Activated CD4-positive, alpha-beta memory T cell treated with anti-CD3 and anti-CD28 coated beads for 36 hours (primary cell): ENCODE measurements at regions of chr10 and their contacts with region 1.

Region 1: DNA sequence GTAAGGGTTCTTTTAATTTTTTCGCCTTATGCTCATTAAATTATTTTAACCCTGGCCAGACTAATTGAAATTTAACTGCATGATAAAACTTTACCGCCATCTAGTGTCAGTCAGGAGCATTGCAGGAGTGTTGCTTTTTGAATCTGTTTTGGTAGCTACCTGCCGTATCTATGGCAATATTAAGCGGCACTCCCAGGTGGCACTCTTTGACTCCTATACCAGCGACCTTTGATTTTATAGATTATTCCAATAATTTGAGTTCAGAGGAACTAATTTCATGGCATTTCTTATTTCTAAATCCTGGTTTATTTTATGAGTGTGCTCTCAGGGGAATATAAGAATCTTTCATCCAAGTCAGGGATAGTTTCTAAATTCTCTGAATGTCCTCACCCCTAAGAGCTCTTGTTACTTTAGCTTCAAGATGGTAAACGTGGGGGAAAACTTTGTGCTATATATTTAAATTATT is 198.9 kb downstream of the REEP3 start:
- DNase-seq: peak; percentile 47
- H3K4me3 Mint-ChIP-seq: no peak overlapping the region
- H3K27ac Mint-ChIP-seq: no peak overlapping the region
- H3K4me1 Mint-ChIP-seq: peaks cover 7% of the 10 kb centered on the region
- H3K27me3 Mint-ChIP-seq: peaks cover 5% of the 10 kb centered on the region

Region 2: DNA sequence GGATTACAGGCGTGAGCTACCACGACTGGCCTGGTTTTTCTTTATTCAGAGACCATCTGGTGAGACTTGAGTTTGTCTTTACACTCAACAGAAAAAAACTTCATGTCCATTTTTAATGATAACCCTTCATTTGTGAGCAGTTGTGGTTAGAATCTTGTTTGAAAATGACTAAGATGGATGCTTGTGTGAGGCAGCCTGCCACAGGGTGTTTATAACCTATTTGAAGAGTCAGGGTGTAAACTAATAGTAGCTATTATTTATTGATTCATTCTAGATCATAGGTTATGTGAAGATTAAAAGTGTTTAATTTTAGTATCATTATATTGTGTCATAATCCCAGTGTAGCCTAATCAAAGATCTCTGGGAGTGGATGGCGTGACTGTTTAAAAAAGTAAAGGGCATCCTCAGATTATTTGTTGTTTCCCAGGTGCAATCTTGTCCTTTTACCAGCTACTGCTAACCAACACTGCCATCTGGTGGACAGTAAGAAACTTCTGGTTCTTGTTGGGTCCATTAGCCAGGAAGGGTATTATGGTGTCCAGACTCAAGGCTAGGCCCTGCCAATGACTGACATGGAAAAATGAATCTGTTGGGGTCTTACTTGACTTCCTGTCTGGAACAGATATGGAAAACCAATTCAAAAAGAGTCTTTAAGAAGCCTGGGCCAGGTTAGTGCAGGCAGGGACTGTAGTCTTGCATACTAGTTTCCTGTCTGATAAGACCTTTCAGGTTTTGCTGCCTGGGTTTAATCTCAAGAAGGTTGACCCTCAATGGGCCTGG is 562.1 kb before region 1 on chr10:
- CTCF ChIA-PET with region 1: interaction called, 319 read pairs
- POLR2A ChIA-PET with region 1: no interaction called
- intact Hi-C with region 1: no loop called
- DNase-seq: peak; percentile 41
- H3K4me3 Mint-ChIP-seq: no peak overlapping the region
- H3K27ac Mint-ChIP-seq: no peak overlapping the region
- H3K4me1 Mint-ChIP-seq: peaks cover 7% of the 10 kb centered on the region
- H3K27me3 Mint-ChIP-seq: no peaks in the 10 kb centered on the region

Region 3: DNA sequence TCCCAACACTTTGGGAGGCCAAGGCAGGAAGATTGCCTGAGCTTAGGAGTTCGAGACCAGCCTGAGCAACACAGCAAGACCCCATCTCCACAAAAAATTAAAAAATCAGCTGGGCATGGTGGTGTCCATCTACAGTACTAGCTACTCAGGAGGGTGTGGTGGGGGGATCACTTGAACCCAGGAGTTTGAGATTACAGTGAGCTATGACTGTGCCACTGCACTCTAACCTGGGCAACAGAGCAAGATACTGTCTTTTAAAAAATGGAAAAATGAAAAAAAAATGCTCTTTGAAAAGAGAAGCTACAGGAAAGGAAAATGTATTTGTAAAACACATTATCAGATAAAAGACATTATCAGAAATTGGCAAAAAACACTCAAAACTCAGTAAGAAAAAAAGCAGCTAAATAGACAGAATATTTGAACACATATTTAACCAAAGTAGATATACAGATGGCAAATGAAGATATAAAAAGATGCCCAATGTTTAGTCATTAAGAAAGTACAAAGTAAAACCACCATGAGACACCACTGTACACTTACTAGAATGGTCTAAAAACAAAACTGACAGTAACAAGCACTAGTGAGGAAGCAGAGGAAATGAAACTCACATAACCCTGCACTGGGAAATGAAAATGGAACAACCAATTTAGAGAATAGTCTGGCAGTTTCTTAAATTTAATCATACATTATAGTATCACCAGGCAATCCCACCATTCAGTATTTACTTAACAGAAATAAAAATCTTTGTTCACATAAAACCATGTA is 546.5 kb before region 1 on chr10:
- CTCF ChIA-PET with region 1: interaction called, 319 read pairs
- POLR2A ChIA-PET with region 1: no interaction called
- intact Hi-C with region 1: no loop called
- DNase-seq: no peak
- H3K4me3 Mint-ChIP-seq: no peak overlapping the region
- H3K27ac Mint-ChIP-seq: peak overlapping the region; percentile 65
- H3K4me1 Mint-ChIP-seq: peaks cover 52% of the 10 kb centered on the region
- H3K27me3 Mint-ChIP-seq: no peaks in the 10 kb centered on the region

Region 4: DNA sequence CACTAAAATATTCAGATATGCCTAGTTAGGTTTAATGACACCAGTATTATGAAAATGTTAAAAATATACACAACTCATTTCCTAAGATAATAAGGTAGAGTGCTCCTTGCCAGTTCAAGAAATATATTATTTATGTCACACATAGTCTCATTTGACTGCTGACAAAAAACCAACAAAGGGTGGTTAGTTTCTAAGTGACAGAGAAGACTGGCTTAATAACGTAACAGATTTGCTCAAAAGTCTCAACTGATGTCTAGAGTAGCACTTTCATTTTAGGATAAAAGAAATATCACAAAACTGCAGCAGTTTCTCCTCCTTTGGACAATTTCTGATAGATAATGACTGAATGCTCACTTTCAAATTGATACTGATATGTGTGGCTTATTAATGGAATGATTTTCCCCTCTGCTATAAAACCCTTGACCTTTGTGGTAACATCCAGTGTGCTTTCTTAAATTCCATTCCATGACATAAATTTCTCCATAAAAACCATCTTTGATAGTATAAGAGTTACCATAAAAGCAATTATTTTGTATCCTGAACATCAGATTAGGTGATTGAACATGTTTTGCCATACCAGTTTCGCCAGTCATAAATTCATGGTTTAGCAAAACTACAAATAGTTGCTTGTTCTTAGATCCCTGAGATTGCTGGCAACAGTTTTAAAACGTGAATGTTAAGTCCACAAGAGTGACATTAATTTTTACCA is 492.7 kb before region 1 on chr10:
- CTCF ChIA-PET with region 1: interaction called, 11 read pairs
- POLR2A ChIA-PET with region 1: no interaction called
- intact Hi-C with region 1: no loop called
- DNase-seq: no peak
- H3K4me3 Mint-ChIP-seq: peak overlapping the region; percentile 47
- H3K27ac Mint-ChIP-seq: peak overlapping the region; percentile 80
- H3K4me1 Mint-ChIP-seq: peaks cover 50% of the 10 kb centered on the region
- H3K27me3 Mint-ChIP-seq: no peaks in the 10 kb centered on the region

Region 5: GRCh38 chr10:63515002-63515763 is 204.9 kb before region 1 on chr10:
- CTCF ChIA-PET with region 1: interaction called, 11 read pairs
- POLR2A ChIA-PET with region 1: no interaction called
- intact Hi-C with region 1: no loop called
- DNase-seq: peak; percentile 33
- H3K4me3 Mint-ChIP-seq: no peak overlapping the region
- H3K27ac Mint-ChIP-seq: no peak overlapping the region
- H3K4me1 Mint-ChIP-seq: peaks cover 65% of the 10 kb centered on the region
- H3K27me3 Mint-ChIP-seq: no peaks in the 10 kb centered on the region

Region 6: GRCh38 chr10:63629363-63630084 is 90.6 kb before region 1 on chr10:
- CTCF ChIA-PET with region 1: interaction called, 89 read pairs
- POLR2A ChIA-PET with region 1: no interaction called
- intact Hi-C with region 1: loop called (anchors 2 kb)
- DNase-seq: peak; percentile 89
- H3K4me3 Mint-ChIP-seq: peak overlapping the region; percentile 90
- H3K27ac Mint-ChIP-seq: peak overlapping the region; percentile 75
- H3K4me1 Mint-ChIP-seq: peaks cover 24% of the 10 kb centered on the region
- H3K27me3 Mint-ChIP-seq: peaks cover 2% of the 10 kb centered on the region

Region 7: DNA sequence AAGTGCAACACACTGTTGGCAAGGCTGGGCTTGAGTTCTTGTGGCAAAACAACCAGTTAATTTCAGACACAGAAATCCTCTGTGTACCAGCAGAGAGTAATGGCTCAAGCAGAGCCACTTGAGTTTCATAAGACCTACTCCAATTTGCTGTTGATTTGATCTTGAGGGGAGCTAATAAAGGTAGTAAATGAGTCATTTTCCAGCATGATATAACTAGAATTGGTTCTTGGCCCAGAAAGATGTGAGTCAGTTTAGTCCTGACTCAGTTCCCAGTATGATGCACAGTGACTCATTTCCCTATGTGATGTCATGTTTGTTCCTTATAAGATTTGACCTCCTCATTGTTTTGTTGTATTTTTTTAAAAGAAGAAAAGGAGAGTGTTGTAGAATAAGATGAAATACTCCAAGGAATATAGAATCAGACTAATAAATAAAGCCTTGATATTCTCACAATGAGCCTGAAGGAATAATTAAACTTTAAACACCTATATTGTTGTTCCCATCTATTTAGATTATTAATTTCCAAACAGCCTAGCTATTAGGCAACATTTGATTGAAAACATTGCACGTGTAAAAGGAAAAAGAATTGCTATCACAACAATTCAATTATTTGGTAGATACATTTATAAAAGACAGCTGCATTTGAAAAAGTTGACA is 12.7 kb before region 1 on chr10:
- CTCF ChIA-PET with region 1: interaction called, 32 read pairs
- POLR2A ChIA-PET with region 1: interaction called, 4 read pairs
- intact Hi-C with region 1: no loop called
- DNase-seq: peak; percentile 48
- H3K4me3 Mint-ChIP-seq: no peak overlapping the region
- H3K27ac Mint-ChIP-seq: peak overlapping the region; percentile 20
- H3K4me1 Mint-ChIP-seq: peaks cover 12% of the 10 kb centered on the region
- H3K27me3 Mint-ChIP-seq: no peaks in the 10 kb centered on the region

Region 8: DNA sequence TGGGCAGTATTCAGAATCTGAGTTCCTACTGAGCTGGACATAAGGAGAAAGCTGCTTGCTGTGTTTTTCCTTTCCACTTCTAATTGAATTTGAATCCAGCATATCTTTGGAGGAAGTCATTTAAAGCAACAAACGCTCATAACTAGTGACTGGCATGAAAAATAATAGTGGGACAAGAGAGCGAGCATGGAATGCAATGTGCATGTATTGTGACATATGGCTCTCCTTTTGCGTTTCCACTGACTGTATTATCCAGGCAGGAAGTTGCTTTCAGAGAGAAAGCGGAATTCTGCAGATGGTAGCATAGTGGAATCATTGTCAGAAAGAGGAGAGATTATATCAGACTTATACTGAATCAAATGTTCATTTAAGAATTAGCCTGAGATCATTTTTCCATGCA is 169.7 kb after region 1 on chr10:
- CTCF ChIA-PET with region 1: no interaction called
- POLR2A ChIA-PET with region 1: no interaction called
- intact Hi-C with region 1: no loop called
- DNase-seq: no peak
- H3K4me3 Mint-ChIP-seq: no peak overlapping the region
- H3K27ac Mint-ChIP-seq: no peak overlapping the region
- H3K4me1 Mint-ChIP-seq: no peaks in the 10 kb centered on the region
- H3K27me3 Mint-ChIP-seq: peaks cover 4% of the 10 kb centered on the region

Region 9: GRCh38 chr10:63976538-63976937 is 256.4 kb after region 1 on chr10:
- CTCF ChIA-PET with region 1: no interaction called
- POLR2A ChIA-PET with region 1: no interaction called
- intact Hi-C with region 1: no loop called
- DNase-seq: peak; percentile 54
- H3K4me3 Mint-ChIP-seq: no peak overlapping the region
- H3K27ac Mint-ChIP-seq: no peak overlapping the region
- H3K4me1 Mint-ChIP-seq: no peaks in the 10 kb centered on the region
- H3K27me3 Mint-ChIP-seq: no peaks in the 10 kb centered on the region

Region 10: DNA sequence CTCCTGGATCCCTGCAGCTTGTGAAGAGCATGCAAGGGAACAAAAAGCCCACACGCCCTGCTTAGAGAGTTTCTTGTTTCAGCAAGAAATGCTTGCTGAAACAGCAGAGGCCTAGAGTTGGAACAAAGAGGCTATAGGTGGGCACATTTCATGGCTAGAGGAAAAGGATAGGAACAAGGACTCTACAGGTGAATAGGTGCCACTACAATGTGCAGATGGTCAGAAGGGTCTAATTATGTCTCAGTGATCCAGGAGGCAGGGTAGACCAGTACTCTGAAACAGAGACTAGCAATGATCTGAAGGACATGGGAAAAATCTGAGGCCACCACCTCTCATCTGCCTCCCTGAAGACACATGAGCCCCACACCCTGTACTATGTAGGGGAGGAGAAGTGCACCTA is 410.0 kb after region 1 on chr10:
- CTCF ChIA-PET with region 1: no interaction called
- POLR2A ChIA-PET with region 1: no interaction called
- intact Hi-C with region 1: no loop called
- DNase-seq: no peak
- H3K4me3 Mint-ChIP-seq: no peak overlapping the region
- H3K27ac Mint-ChIP-seq: no peak overlapping the region
- H3K4me1 Mint-ChIP-seq: no peaks in the 10 kb centered on the region
- H3K27me3 Mint-ChIP-seq: no peaks in the 10 kb centered on the region